ENCODE measurements at regions of chr1 and their contacts with region 1.

Region 1: DNA sequence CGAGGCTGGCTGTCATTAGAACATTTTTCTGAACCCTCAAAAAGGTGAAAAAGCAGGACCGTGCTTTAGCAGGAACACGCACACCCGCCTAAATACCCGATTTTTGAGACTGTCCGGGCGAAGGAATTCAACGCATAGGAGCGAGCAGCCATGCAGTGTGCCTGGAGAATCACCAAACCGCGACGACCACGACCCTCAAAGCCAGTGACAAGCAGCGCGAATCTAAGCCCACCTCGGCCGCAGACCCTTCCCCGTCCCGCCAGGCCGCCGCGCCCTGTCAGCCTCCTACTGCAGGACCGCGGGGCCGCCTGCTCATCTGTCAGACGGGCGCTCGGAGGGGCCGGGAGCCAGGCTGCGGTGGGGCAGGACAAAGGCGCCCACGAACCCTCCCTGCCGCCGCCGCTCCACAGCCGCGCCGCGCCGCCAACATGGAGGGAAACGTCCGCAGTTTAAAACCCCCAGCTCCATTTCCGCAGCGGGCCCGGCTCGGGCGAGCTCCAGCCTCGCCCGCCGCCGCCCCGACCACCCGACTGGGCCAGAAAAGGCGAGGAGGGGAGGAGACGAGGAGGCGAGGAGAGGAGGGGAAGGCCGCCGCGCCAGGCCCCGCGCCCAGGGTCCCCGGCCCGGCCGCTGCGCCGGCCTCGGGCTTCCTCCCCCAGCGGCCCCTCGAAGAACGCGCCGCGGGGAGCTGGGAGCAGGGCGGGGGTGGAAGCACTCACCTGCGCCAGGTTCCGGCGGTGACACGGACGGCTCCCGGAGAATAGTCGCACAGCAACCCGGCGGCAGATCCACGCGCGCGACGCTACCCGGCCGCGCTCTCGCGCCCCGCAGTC is at the start of gene LBR:
- DNase-seq: no peak
- ATAC-seq: peak; percentile 79
- H3K4me3 ChIP-seq: peak within 1 kb of the TSS; percentile 83 to 95 (median 93)
- H3K27ac ChIP-seq: peak within 1 kb of the TSS; percentile 86
- H3K4me1 ChIP-seq: peaks cover 48% of the 10 kb centered on the region
- H3K27me3 ChIP-seq: no peaks in the 10 kb centered on the region; a peak in 1 of 5 replicates
- CTCF ChIP-seq: no peak
- EP300 ChIP-seq: no peak
- POLR2A ChIP-seq: peak in 1 of 2 experiments; percentile 72; a peak in 3 of 4 replicates
- RAD21 ChIP-seq: no peak
- total RNA-seq, gene LBR: 64.4 and 76.7 TPM in 2 replicates

Region 2: DNA sequence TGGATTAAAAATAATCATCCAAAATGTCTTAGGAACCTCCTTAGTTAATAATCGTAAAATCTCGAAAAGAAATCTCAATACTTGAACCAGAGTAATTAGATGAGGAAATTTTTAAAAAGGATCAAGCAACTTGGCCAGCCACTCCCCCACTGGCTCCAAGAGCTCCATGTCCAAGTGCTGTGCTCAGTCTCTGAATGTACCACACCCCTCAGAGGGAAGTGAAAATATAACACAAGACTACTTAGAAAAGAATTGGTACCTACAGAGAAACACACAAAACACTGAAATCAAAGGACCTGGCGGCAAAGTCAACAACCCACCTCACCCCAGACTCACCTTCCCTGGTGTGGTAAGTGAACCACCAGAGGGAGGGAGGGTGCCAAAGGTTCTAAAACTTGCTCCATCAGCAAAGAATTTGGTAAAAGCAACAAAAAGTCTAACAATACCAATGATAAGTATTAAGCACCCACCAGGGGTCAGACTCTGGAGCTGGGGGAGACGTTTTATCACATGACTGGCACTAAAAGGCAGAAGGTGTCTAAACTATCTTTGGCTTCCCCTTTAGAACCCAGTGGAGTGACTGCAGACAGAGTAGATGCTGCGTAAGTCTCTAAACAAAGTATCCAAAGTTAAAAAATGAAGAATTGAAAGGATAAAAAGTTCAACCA is 13.6 kb before region 1 on chr1:
- CTCF ChIA-PET with region 1: no interaction called
- POLR2A ChIA-PET with region 1: interaction called, 4 read pairs
- in situ Hi-C with region 1: no loop called
- intact Hi-C with region 1: loop called (anchors 2 kb)
- DNase-seq: no peak
- ATAC-seq: no peak
- H3K4me3 ChIP-seq: no peak overlapping the region
- H3K27ac ChIP-seq: peak overlapping the region; percentile 73
- H3K4me1 ChIP-seq: peaks cover 47% of the 10 kb centered on the region
- H3K27me3 ChIP-seq: no peaks in the 10 kb centered on the region
- CTCF ChIP-seq: no peak
- EP300 ChIP-seq: no peak
- POLR2A ChIP-seq: no peak
- RAD21 ChIP-seq: no peak